CD4-positive, alpha-beta T cell (primary cell): ENCODE measurements at regions of chr15 and their contacts with region 1.

Region 1: DNA sequence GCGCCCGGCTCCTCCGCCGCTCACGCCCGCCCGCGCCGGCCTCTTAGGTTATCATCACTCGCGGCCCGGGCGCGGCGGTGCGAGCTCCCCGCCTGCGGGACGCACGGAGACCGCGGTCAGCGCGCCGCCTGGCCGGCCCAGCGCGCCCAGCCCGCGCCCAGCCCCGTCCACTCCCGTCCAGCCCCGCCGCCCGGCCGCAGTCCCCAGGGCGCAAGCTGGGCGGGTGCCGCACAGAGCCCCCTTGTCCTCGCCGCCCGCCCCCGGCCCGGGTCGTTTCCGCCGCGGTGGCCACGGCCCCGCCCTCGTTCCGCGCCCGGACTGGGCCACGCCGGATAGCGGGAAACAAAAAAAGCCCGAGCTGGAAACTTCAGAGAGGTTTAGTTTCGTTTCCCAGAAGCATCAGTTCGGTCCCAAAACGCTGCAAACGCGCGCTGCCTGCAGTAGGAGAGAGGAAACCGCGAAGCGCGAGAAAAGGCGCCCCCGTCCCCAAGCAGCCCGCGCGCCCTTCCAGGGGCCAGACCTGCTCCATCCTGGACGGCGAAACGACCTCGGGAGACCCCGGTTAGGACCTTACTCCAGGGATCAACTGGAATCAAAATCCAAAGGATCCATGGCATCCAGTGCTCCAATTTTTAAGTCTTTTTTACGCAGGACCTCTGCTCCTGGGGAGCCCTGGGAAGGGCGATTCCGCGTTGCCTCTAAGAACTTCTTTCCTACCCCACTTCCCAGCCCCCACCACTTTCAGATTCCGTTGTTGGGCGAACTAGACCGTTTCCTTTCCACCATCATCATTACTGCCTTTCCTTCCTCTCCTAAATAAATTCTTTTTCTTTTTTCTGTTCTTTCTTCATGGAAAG is at the start of gene ATP10A:
- DNase-seq: peak in 9 of 14 experiments; percentile 31 to 73 (median 61)
- ATAC-seq: no peak
- H3K4me3 ChIP-seq: peak within 1 kb of the TSS; percentile 89
- H3K4me3 Mint-ChIP-seq: peak within 1 kb of the TSS; percentile 96
- H3K27ac ChIP-seq: peak within 1 kb of the TSS; percentile 80 to 86
- H3K27ac Mint-ChIP-seq: peak within 1 kb of the TSS; percentile 93
- H3K4me1 ChIP-seq: peaks cover 50% of the 10 kb centered on the region
- H3K4me1 Mint-ChIP-seq: peaks cover 43% of the 10 kb centered on the region
- H3K27me3 ChIP-seq: no peaks in the 10 kb centered on the region
- H3K27me3 Mint-ChIP-seq: no peaks in the 10 kb centered on the region
- CTCF ChIP-seq: no peak
- total RNA-seq, gene ATP10A: 30.0 to 30.4 TPM

Region 2: DNA sequence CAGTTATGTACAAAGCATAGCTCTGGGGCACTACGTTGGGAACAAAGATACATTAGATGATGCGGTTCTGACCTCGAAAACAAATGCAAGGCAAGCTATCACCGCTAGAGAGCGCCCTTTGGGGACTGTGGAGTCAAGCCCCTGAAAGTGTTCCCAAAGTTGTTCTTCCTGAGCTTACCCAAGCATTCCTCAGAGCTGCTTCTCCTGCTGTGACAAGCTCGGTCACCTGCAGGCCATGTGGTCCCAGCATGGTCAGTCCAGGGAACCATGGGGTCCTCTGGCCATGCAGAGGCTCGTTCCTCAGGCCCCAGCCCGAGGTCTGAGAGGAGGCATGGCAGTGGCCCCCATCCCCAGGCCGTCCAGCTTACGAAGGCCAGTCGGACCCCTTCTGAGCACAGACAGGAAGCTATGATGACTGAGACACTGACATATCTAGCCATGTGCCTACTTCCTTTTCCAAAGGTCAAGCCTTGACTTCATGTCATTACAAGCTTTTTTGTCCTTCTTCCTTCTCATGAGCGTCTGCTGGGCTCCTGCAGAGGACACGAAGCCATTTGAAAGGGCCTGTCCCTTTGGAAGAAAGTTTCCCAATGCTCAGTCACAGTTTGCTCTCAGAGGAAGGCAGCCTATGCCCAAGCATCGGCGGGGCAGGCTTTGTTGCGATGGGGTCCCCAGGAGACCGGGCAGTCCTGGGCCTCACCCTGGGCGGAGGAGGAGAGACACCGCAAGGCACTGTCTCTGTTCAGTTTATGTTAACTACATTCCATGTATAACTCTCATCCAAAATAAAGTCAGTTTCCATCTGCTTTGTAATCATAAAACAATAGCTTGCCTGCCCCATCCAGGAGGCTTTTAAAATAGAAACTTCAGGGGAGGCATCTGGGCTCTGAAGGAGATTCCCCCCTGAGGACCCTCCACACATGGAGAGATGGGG is 79.5 kb before region 1 on chr15:
- CTCF ChIA-PET with region 1: interaction called, 8 read pairs
- POLR2A ChIA-PET with region 1: interaction called, 22 read pairs
- intact Hi-C with region 1: loop called (anchors 2 to 5 kb)
- DNase-seq: peak; percentile 25 to 70 (median 48)
- ATAC-seq: peak; percentile 50
- H3K4me3 ChIP-seq: no peak overlapping the region
- H3K4me3 Mint-ChIP-seq: no peak overlapping the region
- H3K27ac ChIP-seq: no peak overlapping the region
- H3K27ac Mint-ChIP-seq: peak overlapping the region; percentile 47
- H3K4me1 ChIP-seq: peaks cover 26% of the 10 kb centered on the region
- H3K4me1 Mint-ChIP-seq: peaks cover 37% of the 10 kb centered on the region
- H3K27me3 ChIP-seq: no peaks in the 10 kb centered on the region
- H3K27me3 Mint-ChIP-seq: no peaks in the 10 kb centered on the region
- CTCF ChIP-seq: peak; percentile 54

Region 3: DNA sequence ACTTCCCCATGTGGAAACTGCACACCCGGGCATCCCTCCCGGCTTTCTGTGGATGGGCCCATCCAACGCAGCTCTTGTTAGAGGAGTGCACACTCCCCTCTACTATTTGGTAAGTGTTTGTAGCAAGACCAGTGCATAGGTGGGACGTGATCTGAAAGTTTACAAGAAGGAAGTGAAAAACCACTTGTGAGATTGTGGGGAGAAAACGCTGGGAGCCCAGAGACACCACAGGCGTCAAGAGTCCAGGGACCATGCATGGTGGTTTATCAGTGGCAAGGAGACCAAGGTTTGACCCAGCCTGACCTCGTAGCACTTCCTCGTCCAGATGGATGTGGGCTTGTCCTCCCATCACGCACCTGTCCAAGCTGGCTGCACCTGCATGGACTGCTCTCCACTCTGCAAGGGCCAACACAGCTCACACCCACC is 51.8 kb before region 1 on chr15:
- CTCF ChIA-PET with region 1: no interaction called
- POLR2A ChIA-PET with region 1: interaction called, 43 read pairs
- intact Hi-C with region 1: loop called (anchors 2 to 5 kb)
- DNase-seq: peak in 5 of 14 experiments; percentile 8 to 44 (median 38)
- ATAC-seq: peak; percentile 11
- H3K4me3 ChIP-seq: peak overlapping the region; percentile 3
- H3K4me3 Mint-ChIP-seq: peak overlapping the region; percentile 79
- H3K27ac ChIP-seq: peak overlapping the region; percentile 25 to 54
- H3K27ac Mint-ChIP-seq: peak overlapping the region; percentile 92
- H3K4me1 ChIP-seq: peaks cover 42% of the 10 kb centered on the region
- H3K4me1 Mint-ChIP-seq: peaks cover 73% of the 10 kb centered on the region
- H3K27me3 ChIP-seq: no peaks in the 10 kb centered on the region
- H3K27me3 Mint-ChIP-seq: no peaks in the 10 kb centered on the region
- CTCF ChIP-seq: no peak

Region 4: GRCh38 chr15:25850154-25851111 is 12.9 kb before region 1 on chr15:
- CTCF ChIA-PET with region 1: interaction called, 8 read pairs
- POLR2A ChIA-PET with region 1: interaction called, 127 read pairs
- intact Hi-C with region 1: loop called (anchors 1 to 2 kb)
- DNase-seq: peak; percentile 44 to 87 (median 70)
- ATAC-seq: peak; percentile 44
- H3K4me3 ChIP-seq: peak overlapping the region; percentile 64
- H3K4me3 Mint-ChIP-seq: peak overlapping the region; percentile 99
- H3K27ac ChIP-seq: peak overlapping the region; percentile 84 to 92
- H3K27ac Mint-ChIP-seq: peak overlapping the region; percentile 93
- H3K4me1 ChIP-seq: peaks cover 80% of the 10 kb centered on the region
- H3K4me1 Mint-ChIP-seq: peaks cover 94% of the 10 kb centered on the region
- H3K27me3 ChIP-seq: no peaks in the 10 kb centered on the region
- H3K27me3 Mint-ChIP-seq: no peaks in the 10 kb centered on the region
- CTCF ChIP-seq: no peak

Region 5: GRCh38 chr15:25909325-25909724 is 46.0 kb after region 1 on chr15:
- CTCF ChIA-PET with region 1: no interaction called
- POLR2A ChIA-PET with region 1: no interaction called
- intact Hi-C with region 1: no loop called
- DNase-seq: no peak
- ATAC-seq: no peak
- H3K4me3 ChIP-seq: no peak overlapping the region
- H3K4me3 Mint-ChIP-seq: no peak overlapping the region
- H3K27ac ChIP-seq: no peak overlapping the region
- H3K27ac Mint-ChIP-seq: no peak overlapping the region
- H3K4me1 ChIP-seq: no peaks in the 10 kb centered on the region
- H3K4me1 Mint-ChIP-seq: no peaks in the 10 kb centered on the region
- H3K27me3 ChIP-seq: no peaks in the 10 kb centered on the region
- H3K27me3 Mint-ChIP-seq: no peaks in the 10 kb centered on the region
- CTCF ChIP-seq: no peak

Region 6: DNA sequence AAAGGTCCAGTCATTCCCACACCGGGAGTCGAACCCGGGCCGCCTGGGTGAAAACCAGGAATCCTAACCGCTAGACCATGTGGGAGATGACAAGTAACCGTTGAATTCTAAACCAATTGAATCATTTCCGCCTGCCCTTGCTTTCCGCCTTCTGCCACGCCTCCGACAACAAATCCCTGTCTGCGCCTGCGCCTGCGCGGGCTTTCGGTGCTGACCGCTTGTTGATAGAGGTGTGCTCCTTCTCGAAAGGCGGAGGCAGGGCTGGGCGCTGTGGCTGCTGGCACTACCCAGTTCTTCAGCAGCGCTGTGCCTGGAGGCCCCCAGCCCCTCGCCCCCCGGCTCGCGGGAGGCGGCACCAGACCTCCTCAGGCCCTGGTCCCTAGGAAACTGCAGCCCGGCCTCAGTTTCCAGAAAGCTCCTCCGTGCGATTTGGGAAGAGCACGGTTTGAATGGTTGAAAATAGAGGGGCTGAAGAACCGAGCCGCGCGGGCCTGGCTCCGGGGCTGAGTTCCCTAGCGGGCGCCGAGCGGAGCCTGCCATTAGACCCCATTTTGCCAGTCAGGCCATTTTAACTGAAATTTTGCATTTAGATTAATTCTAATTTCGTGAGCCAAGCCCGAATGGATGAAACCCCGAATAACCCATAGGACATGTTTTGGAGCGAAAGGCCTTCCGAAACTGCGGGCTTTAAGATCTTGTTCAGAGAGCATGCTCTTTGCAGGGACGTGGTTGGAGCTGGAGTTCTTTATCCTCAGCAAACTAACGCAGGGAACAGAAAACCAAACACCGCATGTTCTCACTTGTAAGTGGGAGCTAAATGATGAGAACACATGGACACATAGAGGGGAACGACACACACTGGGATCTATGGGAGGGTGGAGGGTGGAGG is 219.1 kb after region 1 on chr15:
- CTCF ChIA-PET with region 1: no interaction called
- POLR2A ChIA-PET with region 1: no interaction called
- intact Hi-C with region 1: loop called (anchors 5 kb)
- DNase-seq: peak; percentile 89 to 98 (median 95)
- ATAC-seq: peak; percentile 95
- H3K4me3 ChIP-seq: peak overlapping the region; percentile 67
- H3K4me3 Mint-ChIP-seq: peak overlapping the region; percentile 89
- H3K27ac ChIP-seq: peak overlapping the region; percentile 56 to 57
- H3K27ac Mint-ChIP-seq: peak overlapping the region; percentile 98
- H3K4me1 ChIP-seq: peaks cover 16% of the 10 kb centered on the region
- H3K4me1 Mint-ChIP-seq: peaks cover 57% of the 10 kb centered on the region
- H3K27me3 ChIP-seq: no peaks in the 10 kb centered on the region
- H3K27me3 Mint-ChIP-seq: peaks cover 14% of the 10 kb centered on the region
- CTCF ChIP-seq: no peak

Region 7: GRCh38 chr15:26197719-26198118 is 334.4 kb after region 1 on chr15:
- CTCF ChIA-PET with region 1: no interaction called
- POLR2A ChIA-PET with region 1: no interaction called
- intact Hi-C with region 1: no loop called
- DNase-seq: no peak
- ATAC-seq: no peak
- H3K4me3 ChIP-seq: no peak overlapping the region
- H3K4me3 Mint-ChIP-seq: no peak overlapping the region
- H3K27ac ChIP-seq: no peak overlapping the region
- H3K27ac Mint-ChIP-seq: no peak overlapping the region
- H3K4me1 ChIP-seq: no peaks in the 10 kb centered on the region
- H3K4me1 Mint-ChIP-seq: no peaks in the 10 kb centered on the region
- H3K27me3 ChIP-seq: no peaks in the 10 kb centered on the region
- H3K27me3 Mint-ChIP-seq: peaks cover 3% of the 10 kb centered on the region
- CTCF ChIP-seq: no peak